T-cell (primary cell): ENCODE measurements at regions of chr2 and their contacts with region 1.

Region 1: DNA sequence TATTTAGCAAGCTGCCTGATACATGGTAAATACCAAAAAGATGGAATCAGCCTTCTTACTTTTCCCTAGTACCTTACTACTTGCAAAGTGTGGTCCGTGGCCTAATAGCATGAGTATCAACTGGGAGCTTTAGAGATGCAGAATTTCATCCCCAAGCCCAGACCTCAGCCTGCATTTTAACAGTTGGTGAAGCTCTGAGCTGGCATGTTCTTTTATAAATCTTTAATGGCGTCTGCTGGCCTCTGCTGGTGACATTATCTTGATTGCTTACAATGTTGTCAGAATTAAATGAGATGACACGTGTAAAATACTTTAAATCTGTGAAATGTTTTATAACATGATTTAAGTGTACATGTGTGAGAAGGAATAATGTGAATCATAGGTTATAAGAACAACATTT is 115.1 kb upstream of the NOSTRIN start:
- DNase-seq: peak in 19 of 35 experiments; percentile 4 to 41 (median 13)
- ATAC-seq: peak in 1 of 4 experiments; percentile 35
- H3K4me3 ChIP-seq: no peak overlapping the region
- H3K4me3 Mint-ChIP-seq: no peak overlapping the region
- H3K27ac ChIP-seq: no peak overlapping the region
- H3K27ac Mint-ChIP-seq: no peak overlapping the region
- H3K4me1 ChIP-seq: no peaks in the 10 kb centered on the region
- H3K4me1 Mint-ChIP-seq: peaks cover 0 to 8% (median 3%) of the 10 kb centered on the region in 3 donors
- H3K27me3 ChIP-seq: no peaks in the 10 kb centered on the region
- H3K27me3 Mint-ChIP-seq: no peaks in the 10 kb centered on the region

Region 2: GRCh38 chr2:168968342-168968741 is 281.0 kb after region 1 on chr2:
- CTCF ChIA-PET with region 1: no interaction called
- POLR2A ChIA-PET with region 1: interaction called in 1 of 2 experiments, 10 read pairs
- DNase-seq: no peak
- ATAC-seq: no peak
- H3K4me3 ChIP-seq: no peak overlapping the region
- H3K4me3 Mint-ChIP-seq: no peak overlapping the region
- H3K27ac ChIP-seq: no peak overlapping the region
- H3K27ac Mint-ChIP-seq: no peak overlapping the region
- H3K4me1 ChIP-seq: peaks cover 5 to 12% of the 10 kb centered on the region in 2 experiments
- H3K4me1 Mint-ChIP-seq: peaks cover 14 to 26% (median 26%) of the 10 kb centered on the region in 3 donors
- H3K27me3 ChIP-seq: no peaks in the 10 kb centered on the region
- H3K27me3 Mint-ChIP-seq: no peaks in the 10 kb centered on the region